Breast epithelium (tissue), 4 donors: ENCODE measurements at regions of chr13 and their contacts with region 1.

Region 1: DNA sequence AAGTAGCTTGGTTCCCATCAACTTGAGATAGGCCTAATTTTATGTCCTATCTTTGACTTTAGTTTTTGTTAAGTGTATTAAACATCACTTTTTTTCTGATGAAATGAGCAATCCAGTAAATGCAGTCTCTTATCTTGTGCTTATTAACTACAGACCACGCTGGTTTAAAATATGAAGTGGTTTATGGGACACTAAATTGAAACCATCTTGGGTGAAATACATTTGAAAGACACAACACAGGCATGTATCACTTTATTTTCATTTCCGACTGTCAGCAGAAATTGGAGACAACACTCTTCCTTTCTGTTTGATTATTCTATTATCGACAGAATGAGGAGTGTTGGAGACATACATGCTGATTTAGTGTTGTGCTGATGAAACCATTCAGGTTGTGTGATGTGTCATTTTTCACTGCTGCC is 447.7 kb downstream of the GPC6 start:
- DNase-seq: no peak
- H3K4me3 ChIP-seq: no peak overlapping the region
- H3K27ac ChIP-seq: no peak overlapping the region
- H3K4me1 ChIP-seq: no peaks in the 10 kb centered on the region
- H3K27me3 ChIP-seq: no peaks in the 10 kb centered on the region
- CTCF ChIP-seq: no peak
- POLR2A ChIP-seq: no peak

Region 2: DNA sequence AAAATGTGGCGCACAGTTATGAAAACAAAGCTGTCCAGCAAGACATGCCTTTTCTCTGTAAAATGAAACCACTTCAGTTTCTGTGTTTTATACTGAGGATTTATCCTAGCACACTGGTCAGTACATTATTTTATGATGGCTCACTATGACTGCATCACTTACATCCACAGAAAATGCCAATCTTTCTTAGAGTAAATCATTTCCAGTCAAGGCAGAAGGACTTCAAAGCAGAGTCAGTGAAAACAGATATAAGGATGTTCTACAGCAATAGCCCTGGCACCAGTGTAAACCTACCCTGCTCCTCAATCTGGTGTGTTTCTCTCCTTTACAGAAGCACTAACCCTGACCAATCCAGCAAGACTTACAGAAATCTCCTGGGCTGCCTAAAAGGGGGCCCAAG is 25.8 kb after region 1 on chr13:
- intact Hi-C with region 1: no loop called
- DNase-seq: no peak
- H3K4me3 ChIP-seq: no peak overlapping the region
- H3K27ac ChIP-seq: no peak overlapping the region
- H3K4me1 ChIP-seq: no peaks in the 10 kb centered on the region
- H3K27me3 ChIP-seq: no peaks in the 10 kb centered on the region
- CTCF ChIP-seq: no peak
- POLR2A ChIP-seq: no peak

Region 3: DNA sequence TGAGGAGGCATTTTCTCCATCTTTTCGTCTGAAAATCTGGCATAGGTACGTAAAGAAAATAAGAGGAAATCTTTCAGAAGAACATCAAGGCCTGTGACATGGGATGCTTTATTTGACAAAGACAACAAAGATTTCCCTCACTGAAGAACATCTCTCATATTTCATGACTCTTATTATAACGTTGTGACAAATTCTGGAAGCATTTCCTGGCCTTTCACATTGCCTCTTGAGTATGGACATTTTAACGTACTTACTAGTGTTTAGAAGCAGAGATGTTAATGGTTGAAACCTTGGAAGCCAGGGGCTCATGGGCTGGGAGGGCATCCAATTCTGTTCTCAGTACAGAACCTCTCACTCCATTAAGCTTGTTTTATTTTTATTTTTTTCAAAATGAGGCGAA is 594.3 kb after region 1 on chr13:
- intact Hi-C with region 1: loop called (anchors 5 kb)
- DNase-seq: no peak
- H3K4me3 ChIP-seq: no peak overlapping the region
- H3K27ac ChIP-seq: no peak overlapping the region
- H3K4me1 ChIP-seq: no peaks in the 10 kb centered on the region
- H3K27me3 ChIP-seq: no peaks in the 10 kb centered on the region
- CTCF ChIP-seq: no peak
- POLR2A ChIP-seq: no peak